ENCODE measurements at regions of chr2 and their contacts with region 1.

Region 1: DNA sequence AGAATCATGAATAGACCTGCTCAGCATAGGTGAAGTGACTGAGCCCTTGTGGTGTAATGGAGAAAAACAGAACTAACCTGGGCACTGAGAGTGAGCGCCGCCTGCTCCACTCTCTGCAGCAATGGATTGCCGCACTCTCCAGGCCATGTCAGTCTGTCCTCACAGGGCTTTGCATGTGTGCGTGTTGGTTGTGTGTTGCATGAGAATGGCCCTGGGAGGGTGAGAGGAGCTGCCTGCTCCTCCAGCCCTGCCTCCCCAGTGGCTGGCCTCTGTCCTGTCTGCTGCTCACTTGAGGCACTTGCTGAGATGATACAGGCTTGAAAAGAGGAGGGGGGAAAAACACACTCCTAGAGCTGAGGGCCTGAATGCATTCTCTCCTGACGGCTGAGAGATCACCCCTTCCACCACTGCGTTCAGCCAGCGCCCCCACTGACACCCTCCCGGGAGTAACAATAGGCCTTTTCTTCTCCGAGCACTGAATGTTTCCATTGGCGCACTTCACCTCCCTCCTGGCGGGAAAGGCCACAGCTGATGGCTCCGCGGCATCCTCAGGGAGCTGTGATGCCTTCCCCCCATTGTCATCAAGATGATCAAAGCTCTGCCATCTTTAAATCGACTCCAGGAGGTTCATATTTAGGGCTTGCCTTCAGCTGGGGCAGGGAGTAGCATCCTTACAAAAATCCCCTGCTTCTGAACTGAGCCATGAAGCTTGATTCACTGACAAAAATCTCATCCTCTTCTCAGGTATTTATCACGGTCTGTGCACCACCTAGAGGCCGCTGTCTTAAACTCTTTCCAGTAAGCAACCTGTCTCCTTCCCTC is 49.9 kb upstream of the DAPL1 start:
- DNase-seq: no peak
- H3K4me3 ChIP-seq: no peak overlapping the region
- H3K27ac ChIP-seq: peak overlapping the region in 2 of 4 donors; percentile 13 to 39
- H3K4me1 ChIP-seq: peaks cover 0 to 49% (median 14%) of the 10 kb centered on the region in 3 donors
- H3K27me3 ChIP-seq: no peaks in the 10 kb centered on the region
- CTCF ChIP-seq: peak in 5 of 6 experiments; percentile 37 to 74 (median 48)
- POLR2A ChIP-seq: no peak

Region 2: GRCh38 chr2:158034199-158034866 is 710.9 kb before region 1 on chr2:
- intact Hi-C with region 1: loop called (anchors 5 kb)
- DNase-seq: no peak
- H3K4me3 ChIP-seq: no peak overlapping the region
- H3K27ac ChIP-seq: no peak overlapping the region
- H3K4me1 ChIP-seq: no peaks in the 10 kb centered on the region
- H3K27me3 ChIP-seq: no peaks in the 10 kb centered on the region
- CTCF ChIP-seq: peak; percentile 15 to 62 (median 46)
- POLR2A ChIP-seq: no peak

Region 3: GRCh38 chr2:158456309-158457066 is 288.8 kb before region 1 on chr2 and contains the starts of genes CCDC148 and PKP4:
- intact Hi-C with region 1: loop called (anchors 10 kb)
- DNase-seq: peak; percentile 29
- H3K4me3 ChIP-seq: peak within 1 kb of the TSS; percentile 71 to 99 (median 92)
- H3K27ac ChIP-seq: peak within 1 kb of the TSS; percentile 89 to 99 (median 98)
- H3K4me1 ChIP-seq: peaks cover 4 to 45% (median 5%) of the 10 kb centered on the region in 3 donors
- H3K27me3 ChIP-seq: no peaks in the 10 kb centered on the region
- CTCF ChIP-seq: peak in 2 of 6 experiments; percentile 40 to 47
- POLR2A ChIP-seq: peak in 3 of 4 donors; percentile 43 to 84 (median 76)
- total RNA-seq, gene CCDC148: 0.19 to 0.31 TPM in 2 of 4 donors, not detected in the others
- total RNA-seq, gene PKP4: 36.3 to 77.1 (median 46.6) TPM

Measured in esophagus squamous epithelium (tissue), 5 donors.